IMR-90 (cell line): ENCODE measurements at regions of chr15 and their contacts with region 1.

Region 1: DNA sequence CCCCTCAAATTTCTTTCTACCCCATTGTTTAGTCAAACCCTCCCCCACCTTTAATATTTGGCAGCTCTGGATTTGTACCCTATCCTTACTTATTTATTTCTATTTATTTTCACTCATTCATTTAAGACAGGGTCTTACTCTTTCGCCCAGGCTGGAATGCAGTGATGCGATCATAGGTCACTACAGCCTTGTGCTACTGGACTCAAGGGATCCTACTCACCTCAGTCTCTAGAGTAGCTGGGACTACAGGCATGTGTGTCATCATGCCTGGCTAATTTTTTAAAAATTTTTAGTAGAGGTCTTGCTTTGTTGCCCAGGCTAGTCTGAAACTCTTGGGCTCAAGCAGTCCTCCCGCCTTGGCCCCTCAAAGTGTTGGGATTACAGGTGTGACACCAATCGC is 35.4 kb downstream of the ARIH1 start:
- DNase-seq: no peak
- ATAC-seq: no peak
- H3K4me3 ChIP-seq: no peak overlapping the region
- H3K27ac ChIP-seq: no peak overlapping the region
- H3K4me1 ChIP-seq: no peaks in the 10 kb centered on the region
- H3K27me3 ChIP-seq: no peaks in the 10 kb centered on the region
- CTCF ChIP-seq: no peak
- POLR2A ChIP-seq: no peak
- RAD21 ChIP-seq: no peak

Region 2: DNA sequence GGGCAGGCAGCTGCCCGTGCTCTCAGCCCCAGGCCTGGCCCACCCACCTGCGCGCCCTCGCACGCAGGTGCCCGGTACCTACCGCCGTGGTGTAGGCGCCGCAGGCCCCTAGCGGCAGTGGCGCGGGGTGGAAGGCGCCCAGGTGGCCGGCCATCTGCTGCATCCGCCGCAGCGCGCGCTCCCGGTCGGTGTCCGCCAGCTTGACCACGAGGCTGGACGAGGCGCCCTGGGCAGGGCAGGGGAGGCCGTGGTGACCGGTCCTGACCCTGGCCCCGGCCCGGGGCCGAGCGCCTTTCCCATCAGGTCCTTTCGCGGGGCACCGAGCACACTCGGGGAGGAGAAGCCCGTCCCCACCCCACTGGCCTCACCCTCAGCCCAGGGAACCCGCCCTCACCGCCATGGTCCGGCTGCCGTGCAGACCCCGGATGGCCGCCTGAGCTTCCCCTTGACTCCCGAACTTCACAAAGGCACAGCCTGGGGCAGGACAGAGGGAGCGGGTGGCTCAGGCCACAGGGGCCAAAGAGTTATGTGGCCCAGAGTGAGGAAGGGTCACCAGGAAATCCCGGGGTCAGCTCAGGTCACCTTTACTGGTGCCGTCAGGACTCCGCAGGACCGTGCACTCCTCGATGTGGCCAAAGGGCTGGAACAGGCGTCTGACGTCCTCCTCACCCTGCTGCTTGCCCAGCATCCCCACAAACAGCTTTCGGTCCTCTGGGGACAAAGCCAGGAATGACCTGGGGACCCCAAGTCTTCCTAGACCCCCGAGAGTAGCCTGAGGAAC is 219.7 kb before region 1 on chr15:
- CTCF ChIA-PET with region 1: no interaction called
- POLR2A ChIA-PET with region 1: no interaction called
- dilution Hi-C with region 1: no loop called
- in situ Hi-C with region 1: no loop called
- intact Hi-C with region 1: no loop called
- DNase-seq: no peak
- ATAC-seq: no peak
- H3K4me3 ChIP-seq: no peak overlapping the region
- H3K27ac ChIP-seq: no peak overlapping the region
- H3K4me1 ChIP-seq: no peaks in the 10 kb centered on the region
- H3K27me3 ChIP-seq: peaks cover 40% of the 10 kb centered on the region
- CTCF ChIP-seq: no peak
- POLR2A ChIP-seq: no peak
- RAD21 ChIP-seq: no peak

Region 3: DNA sequence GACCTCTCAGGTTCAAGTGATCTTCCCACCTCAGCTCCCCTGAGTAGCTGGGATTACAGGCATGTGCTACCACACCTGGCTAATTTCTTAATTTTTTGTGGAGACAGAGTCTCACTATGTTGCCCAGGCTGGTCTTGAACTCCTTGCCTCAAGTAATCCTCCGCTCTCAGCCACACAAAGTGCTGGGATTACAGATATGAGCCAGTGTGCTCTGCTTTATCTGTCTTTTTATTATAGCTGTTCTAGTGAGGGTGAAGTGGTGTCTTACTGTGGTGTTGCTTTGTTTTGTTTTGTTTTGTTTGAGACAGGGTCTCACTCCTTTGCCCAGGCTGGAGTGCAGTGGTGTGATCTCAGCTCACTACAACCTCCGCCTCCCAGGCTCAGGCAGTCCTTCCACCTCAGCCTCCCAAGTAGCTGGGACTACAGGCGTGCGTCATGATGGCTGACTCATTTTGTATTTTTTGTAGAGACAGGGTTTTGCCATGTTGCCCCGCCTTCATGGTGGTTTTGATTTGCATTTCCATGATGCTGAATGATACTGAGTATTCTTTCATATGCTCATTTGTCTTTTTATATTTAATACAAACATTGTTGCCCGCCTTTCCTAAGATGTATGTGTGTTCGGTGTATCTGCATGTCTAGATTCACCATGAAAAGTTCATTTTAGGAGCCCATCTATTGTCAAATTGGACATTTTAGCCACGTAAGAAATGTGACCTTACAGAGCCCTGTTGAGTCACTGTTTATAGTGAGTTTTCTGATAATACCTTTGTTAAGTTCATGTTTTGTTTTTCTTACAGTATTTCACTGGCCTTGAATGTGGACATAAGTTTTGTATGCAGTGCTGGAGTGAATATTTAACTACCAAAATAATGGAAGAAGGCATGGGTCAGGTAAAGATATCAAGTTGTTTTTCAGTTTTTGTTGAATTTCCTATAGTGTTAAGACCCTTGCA is 45.3 kb after region 1 on chr15:
- CTCF ChIA-PET with region 1: no interaction called
- POLR2A ChIA-PET with region 1: no interaction called
- dilution Hi-C with region 1: no loop called
- in situ Hi-C with region 1: no loop called
- intact Hi-C with region 1: loop called (anchors 5 kb)
- DNase-seq: peak; percentile 84
- ATAC-seq: peak; percentile 70
- H3K4me3 ChIP-seq: no peak overlapping the region
- H3K27ac ChIP-seq: no peak overlapping the region
- H3K4me1 ChIP-seq: peaks cover 5% of the 10 kb centered on the region; the same call in 1 of the 2 replicates
- H3K27me3 ChIP-seq: no peaks in the 10 kb centered on the region
- CTCF ChIP-seq: no peak
- POLR2A ChIP-seq: no peak
- RAD21 ChIP-seq: no peak

Region 4: DNA sequence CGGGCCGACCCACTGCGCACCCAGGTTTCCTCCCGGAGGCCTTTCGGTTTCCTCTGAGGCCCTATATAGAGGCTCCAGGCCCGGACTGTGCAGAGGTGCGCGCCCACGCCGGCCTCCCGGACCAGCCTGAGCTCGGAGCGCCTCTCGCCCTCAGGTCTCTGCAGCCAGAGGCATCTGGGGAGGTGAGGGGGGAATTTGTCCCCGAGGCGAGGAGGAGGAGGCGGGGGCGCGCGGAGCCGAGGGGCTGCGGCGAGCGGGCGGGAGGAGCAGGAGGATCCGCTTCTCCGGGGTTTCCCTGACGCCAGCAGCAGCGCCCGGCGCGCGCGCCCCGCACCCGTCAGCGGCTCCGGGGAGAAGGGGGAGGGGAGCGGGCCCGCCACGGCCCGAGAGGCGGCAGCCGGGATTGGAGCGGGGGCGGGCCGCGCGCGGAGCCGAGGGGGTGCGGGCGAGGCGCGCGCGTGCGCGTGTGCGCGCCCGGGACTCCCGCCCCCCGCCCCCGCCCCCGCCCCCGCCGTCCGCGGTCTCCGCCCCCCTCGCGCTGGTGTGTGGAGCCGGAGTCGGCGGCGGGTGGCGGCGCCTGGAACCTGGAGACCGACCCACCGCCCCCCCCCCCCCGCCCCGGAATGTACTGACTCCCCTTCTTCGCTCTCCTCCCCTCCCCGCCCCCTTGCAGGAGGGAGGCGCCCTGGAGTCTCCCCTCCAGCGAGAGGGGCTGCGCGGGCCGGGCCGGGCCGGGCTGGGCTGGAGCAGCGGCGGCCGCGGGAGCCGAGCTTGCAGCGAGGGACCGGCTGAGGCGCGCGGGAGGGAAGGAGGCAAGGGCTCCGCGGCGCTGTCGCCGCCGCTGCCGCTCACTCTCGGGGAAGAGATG is 542.6 kb after region 1 on chr15 and contains the start of gene NEO1:
- CTCF ChIA-PET with region 1: no interaction called
- POLR2A ChIA-PET with region 1: no interaction called
- dilution Hi-C with region 1: no loop called
- in situ Hi-C with region 1: no loop called
- intact Hi-C with region 1: no loop called
- DNase-seq: peak; percentile 70
- ATAC-seq: peak; percentile 93
- H3K4me3 ChIP-seq: peak within 1 kb of the TSS; percentile 90
- H3K27ac ChIP-seq: peak within 1 kb of the TSS; percentile 91
- H3K4me1 ChIP-seq: peaks cover 2% of the 10 kb centered on the region; the same call in 1 of the 2 replicates
- H3K27me3 ChIP-seq: peaks cover 10% of the 10 kb centered on the region
- CTCF ChIP-seq: no peak
- POLR2A ChIP-seq: no peak
- RAD21 ChIP-seq: no peak
- total RNA-seq, gene NEO1: 16.3 and 18.3 TPM in 2 replicates